ENCODE measurements at regions of chr20 and their contacts with region 1.

Region 1: DNA sequence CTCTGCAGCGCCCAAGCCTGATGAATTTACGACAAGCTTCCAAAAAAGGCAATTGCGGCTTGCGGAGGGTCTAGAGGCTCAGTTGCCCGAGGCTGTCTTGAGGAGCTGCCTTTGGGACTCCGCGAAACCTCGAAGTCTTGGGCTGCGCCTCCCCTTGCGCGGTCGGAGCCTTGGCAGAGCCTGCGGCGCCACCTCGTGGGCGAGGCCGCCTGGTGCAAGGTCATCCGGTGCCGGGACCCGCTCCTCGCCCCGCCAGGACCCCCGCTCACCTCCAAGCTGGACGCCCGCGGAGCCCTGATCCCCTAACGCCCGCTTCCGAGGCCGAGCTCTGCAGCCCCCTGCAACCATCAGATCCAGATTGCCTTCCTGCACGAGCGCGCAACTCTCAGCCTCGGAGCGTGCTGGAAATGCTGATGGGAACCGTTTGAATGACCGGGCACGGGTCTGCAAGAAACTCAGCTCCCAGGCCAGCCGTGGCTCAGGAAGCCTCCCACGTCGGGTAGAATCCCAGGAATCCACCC is 14.9 kb upstream of the FAM210B start:
- DNase-seq: peak; percentile 24
- ATAC-seq: peak; percentile 98
- H3K4me3 ChIP-seq: 0 out of 2 replicates have a peak overlapping the region, but pooled peaks have one; percentile 15
- H3K27ac ChIP-seq: no peak overlapping the region
- H3K4me1 ChIP-seq: no peaks in the 10 kb centered on the region
- H3K27me3 ChIP-seq: peaks cover 25% of the 10 kb centered on the region
- CTCF ChIP-seq: peak; percentile 59
- POLR2A ChIP-seq: no peak
- RAD21 ChIP-seq: peak; percentile 71

Region 2: DNA sequence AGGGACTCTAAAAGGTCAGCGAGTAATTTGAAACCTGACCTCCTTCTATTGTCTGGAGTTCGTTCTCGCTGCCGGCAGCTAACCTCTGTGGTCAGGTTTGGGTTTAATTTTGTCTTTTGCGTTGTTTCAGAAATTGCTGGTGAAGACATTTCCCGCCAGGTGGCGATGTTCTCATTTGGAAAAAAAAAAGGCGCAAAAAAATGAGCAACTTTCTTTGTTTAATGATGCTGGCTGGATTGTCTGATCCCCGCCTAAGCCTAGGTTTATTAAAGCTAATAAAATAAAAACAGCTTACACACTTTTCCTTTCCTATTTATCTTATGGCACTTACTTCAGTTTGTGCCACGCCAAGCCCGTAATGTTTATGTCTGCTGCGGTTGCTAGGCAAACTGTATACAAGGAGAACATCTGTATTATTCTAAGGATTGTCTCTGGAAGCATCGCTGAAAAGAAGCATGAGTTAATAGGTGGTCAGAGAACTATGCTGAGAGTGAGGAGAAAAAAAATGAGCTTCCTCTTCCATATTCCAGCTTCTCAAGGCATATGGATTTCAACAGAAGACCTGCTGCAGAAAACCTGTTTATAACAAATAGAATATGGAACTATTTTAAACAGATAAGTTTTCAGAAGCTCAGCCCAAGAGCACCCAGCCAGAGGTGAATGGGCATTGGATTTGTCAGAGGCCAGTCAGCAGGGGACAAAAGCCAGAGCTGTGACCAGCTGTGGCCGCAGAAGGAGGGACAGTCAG is 1662.9 kb before region 1 on chr20:
- CTCF ChIA-PET with region 1: no interaction called
- POLR2A ChIA-PET with region 1: no interaction called
- dilution Hi-C with region 1: no loop called
- in situ Hi-C with region 1: loop called (anchors 10 kb)
- intact Hi-C with region 1: loop called (anchors 1 kb)
- DNase-seq: peak; percentile 35
- ATAC-seq: no peak
- H3K4me3 ChIP-seq: no peak overlapping the region
- H3K27ac ChIP-seq: no peak overlapping the region
- H3K4me1 ChIP-seq: no peaks in the 10 kb centered on the region
- H3K27me3 ChIP-seq: no peaks in the 10 kb centered on the region; the same call in 1 of the 2 replicates
- CTCF ChIP-seq: peak; percentile 60
- POLR2A ChIP-seq: no peak
- RAD21 ChIP-seq: peak; percentile 47

Region 3: GRCh38 chr20:56422076-56422823 is 78.3 kb after region 1 on chr20:
- CTCF ChIA-PET with region 1: no interaction called
- POLR2A ChIA-PET with region 1: no interaction called
- dilution Hi-C with region 1: no loop called
- in situ Hi-C with region 1: no loop called
- intact Hi-C with region 1: no loop called
- DNase-seq: peak; percentile 88
- ATAC-seq: peak; percentile 83
- H3K4me3 ChIP-seq: no peak overlapping the region
- H3K27ac ChIP-seq: peak overlapping the region; percentile 90
- H3K4me1 ChIP-seq: peaks cover 39% of the 10 kb centered on the region
- H3K27me3 ChIP-seq: no peaks in the 10 kb centered on the region
- CTCF ChIP-seq: peak; percentile 34
- POLR2A ChIP-seq: no peak
- RAD21 ChIP-seq: peak; percentile 43; the same call in 1 of the 2 replicates

Measured in IMR-90 (cell line).